ENCODE measurements at regions of chr20 and their contacts with region 1.

Region 1: DNA sequence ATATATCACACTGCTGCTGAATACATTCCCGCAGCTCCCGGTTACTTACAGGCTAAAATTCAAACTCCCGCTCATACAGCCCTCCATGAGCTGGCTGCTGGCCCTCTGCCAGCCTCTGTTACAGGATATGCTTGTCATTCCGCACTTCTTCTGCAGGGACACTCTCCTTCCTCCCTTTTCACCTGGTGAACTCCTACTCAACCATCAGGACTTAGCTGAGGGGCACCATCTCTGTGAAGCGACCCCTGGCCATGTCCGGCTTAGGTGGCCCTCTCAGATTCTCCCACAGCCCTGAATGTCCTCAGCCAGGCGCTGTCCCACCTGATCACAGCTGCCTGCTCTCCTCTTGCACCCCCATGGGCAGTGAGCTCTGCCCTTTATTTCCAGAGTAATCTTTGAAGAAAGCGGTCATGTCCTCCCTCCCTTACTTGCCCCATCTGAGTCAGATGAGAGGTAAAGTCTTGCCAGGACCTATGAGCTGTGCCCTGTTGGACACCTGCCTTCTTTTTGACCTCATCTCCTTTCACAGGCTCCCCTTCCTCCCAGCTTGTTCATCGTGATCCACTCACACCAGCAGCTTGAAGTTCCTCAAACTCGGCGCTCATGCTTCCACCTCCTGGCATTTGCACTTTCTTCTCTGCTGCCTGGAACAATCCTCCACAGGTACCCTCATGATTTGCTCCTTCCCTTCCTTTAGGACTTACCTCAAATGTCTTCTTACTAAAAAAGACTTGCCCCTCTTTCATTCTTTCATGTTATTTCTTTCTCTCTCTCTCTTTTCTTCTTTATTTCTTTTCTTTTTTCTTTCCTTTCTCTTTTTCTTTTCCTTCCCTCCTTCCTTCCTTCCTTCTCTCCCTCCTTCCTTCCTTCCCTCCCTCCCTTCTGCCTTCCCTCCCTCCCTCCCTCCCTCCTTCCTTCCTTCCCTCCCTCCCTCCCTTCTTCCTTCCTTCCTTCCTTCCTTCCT is 5.6 kb downstream of the CYP24A1 start:
- DNase-seq: peak; percentile 57 to 92
- ATAC-seq: peak; percentile 40 to 75
- H3K4me3 ChIP-seq: peak overlapping the region; percentile 83
- H3K27ac ChIP-seq: peak overlapping the region; percentile 93 to 100
- H3K4me1 ChIP-seq: peaks cover 55% of the 10 kb centered on the region
- CTCF ChIP-seq: no peak
- EP300 ChIP-seq: no peak
- POLR2A ChIP-seq: peak; percentile 21; the same call in 1 of the 2 replicates
- RAD21 ChIP-seq: no peak

Region 2: DNA sequence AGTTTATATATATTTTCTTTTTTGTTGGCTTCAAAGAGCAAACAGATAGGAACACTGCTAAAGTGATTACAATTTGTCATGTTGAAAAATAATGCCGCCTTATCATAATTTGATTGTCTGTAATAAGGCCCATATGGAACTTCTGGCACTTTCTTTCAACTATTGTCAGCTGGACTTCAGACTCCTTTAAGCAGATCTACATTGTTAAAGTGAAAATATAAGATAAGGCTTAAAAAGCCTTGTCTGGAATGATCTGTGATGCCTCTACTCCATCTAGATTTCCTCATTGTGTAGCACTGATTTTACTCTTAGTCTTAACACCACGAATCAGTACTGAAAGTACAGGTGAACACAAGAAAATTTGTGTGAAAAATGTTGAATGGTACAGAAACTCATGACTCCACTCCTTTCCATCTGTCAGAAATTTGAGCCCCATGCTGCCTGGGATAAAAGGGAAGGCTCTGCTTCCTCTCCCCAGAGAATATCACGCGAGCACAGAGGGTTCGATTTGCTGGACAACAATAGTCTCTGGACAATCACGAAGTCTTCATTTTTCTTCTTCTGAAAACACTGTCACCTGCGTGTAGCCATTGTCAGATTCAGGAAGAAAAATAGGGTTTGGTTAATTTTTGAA is 153.8 kb before region 1 on chr20:
- CTCF ChIA-PET with region 1: no interaction called
- POLR2A ChIA-PET with region 1: no interaction called
- DNase-seq: no peak
- ATAC-seq: no peak
- H3K4me3 ChIP-seq: no peak overlapping the region
- H3K27ac ChIP-seq: no peak overlapping the region
- H3K4me1 ChIP-seq: no peaks in the 10 kb centered on the region
- CTCF ChIP-seq: no peak
- EP300 ChIP-seq: no peak
- POLR2A ChIP-seq: no peak
- RAD21 ChIP-seq: no peak

Region 3: GRCh38 chr20:54115151-54115854 is 52.9 kb before region 1 on chr20:
- CTCF ChIA-PET with region 1: interaction called, 3 read pairs
- POLR2A ChIA-PET with region 1: interaction called, 24 read pairs
- DNase-seq: peak; percentile 77 to 92
- ATAC-seq: peak; percentile 84 to 88
- H3K4me3 ChIP-seq: no peak overlapping the region
- H3K27ac ChIP-seq: peak overlapping the region; percentile 94 to 98
- H3K4me1 ChIP-seq: peaks cover 76% of the 10 kb centered on the region
- CTCF ChIP-seq: no peak
- EP300 ChIP-seq: no peak
- POLR2A ChIP-seq: no peak
- RAD21 ChIP-seq: no peak

Region 4: DNA sequence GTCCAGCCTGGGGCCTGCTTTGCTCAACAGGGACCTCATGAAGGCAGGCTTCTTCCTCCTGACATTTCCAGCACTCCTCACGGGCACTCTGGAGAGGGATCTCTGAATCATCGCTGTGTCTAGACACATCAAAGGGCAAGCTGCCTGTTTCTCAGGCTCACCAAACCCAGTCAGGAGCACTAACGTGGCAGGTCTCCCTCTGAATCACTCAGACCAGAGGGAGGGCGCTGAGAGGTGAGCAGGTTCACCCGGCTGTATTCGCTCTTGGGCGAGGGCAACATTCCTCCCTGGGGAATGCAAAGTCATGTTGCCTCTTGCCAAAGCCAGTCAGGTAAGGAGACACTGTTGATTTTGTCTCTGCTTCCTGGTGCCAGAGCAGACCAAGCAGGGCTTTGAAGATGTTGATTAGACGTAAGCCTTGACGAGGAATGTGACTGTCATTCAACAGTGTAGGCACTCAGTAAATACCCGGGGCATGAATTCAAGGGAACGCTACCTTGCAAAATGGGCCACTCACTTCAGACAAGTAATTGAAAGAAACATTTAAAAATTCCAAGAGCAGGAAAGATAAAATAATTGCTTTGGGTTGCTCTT is 44.5 kb before region 1 on chr20:
- CTCF ChIA-PET with region 1: interaction called, 4 read pairs
- POLR2A ChIA-PET with region 1: interaction called, 22 read pairs
- DNase-seq: peak; percentile 93 to 100
- ATAC-seq: peak; percentile 95 to 98
- H3K4me3 ChIP-seq: no peak overlapping the region
- H3K27ac ChIP-seq: peak overlapping the region; percentile 96 to 98
- H3K4me1 ChIP-seq: peaks cover 86% of the 10 kb centered on the region
- CTCF ChIP-seq: no peak
- EP300 ChIP-seq: peak; percentile 100
- POLR2A ChIP-seq: no peak
- RAD21 ChIP-seq: peak; percentile 44 to 60

Region 5: DNA sequence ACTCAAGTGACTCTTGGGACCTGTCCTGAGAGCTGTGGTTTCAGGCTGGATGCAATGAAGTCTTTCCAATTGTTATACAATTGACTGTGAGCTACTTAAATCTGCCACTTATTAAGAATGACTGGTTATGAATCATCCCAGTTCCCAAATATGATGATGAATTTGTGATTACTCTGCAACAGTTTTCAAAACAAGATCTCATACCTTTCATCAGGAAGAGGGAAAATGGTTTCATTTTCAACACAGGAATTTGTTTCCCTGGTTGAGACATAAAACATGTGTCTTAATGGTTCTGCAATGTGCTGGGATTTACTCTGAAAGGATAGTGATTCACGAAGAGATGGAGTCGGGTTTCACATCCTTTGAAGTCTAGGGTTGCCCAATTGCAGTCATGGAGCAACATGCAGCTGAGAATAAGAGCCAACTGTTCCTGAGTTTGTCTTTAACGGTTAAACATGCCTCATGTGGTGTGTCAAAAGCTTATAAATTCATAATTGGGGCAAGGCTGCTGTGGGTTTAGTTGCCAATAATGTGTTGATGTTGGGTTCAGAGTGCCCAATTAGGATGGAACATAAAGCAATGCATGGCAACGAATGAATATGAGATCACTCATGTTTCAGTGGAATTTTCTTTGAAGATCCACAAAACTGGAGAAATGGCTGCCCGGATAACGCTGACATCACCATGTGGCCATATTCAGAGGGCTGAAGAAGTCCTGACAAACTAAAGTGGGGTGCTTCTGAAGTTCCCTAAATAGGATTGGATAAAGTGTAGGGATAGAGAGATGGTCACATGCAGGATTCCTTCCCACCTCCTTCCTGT is 35.4 kb before region 1 on chr20:
- CTCF ChIA-PET with region 1: interaction called, 5 read pairs
- POLR2A ChIA-PET with region 1: interaction called, 19 read pairs
- DNase-seq: peak; percentile 70 to 96
- ATAC-seq: peak; percentile 83 to 93
- H3K4me3 ChIP-seq: no peak overlapping the region
- H3K27ac ChIP-seq: peak overlapping the region; percentile 87 to 96
- H3K4me1 ChIP-seq: peaks cover 49% of the 10 kb centered on the region
- CTCF ChIP-seq: no peak
- EP300 ChIP-seq: peak; percentile 98
- POLR2A ChIP-seq: no peak
- RAD21 ChIP-seq: peak in 1 of 2 experiments; percentile 47; a peak in 4 of 5 replicates

Region 6: GRCh38 chr20:54156981-54157835 is 11.0 kb before region 1 on chr20:
- CTCF ChIA-PET with region 1: interaction called, 10 read pairs
- POLR2A ChIA-PET with region 1: interaction called, 69 read pairs
- DNase-seq: peak in 1 of 2 experiments; percentile 61
- ATAC-seq: no peak
- H3K4me3 ChIP-seq: peak overlapping the region; percentile 5; the same call in 1 of the 3 replicates
- H3K27ac ChIP-seq: peak overlapping the region; percentile 93 to 100
- H3K4me1 ChIP-seq: peaks cover 100% of the 10 kb centered on the region
- CTCF ChIP-seq: no peak
- EP300 ChIP-seq: no peak
- POLR2A ChIP-seq: no peak
- RAD21 ChIP-seq: no peak

Measured in A549 (cell line).